ENCODE measurements at regions of chr7 and their contacts with region 1.

Region 1: GRCh38 chr7:117435475-117436043 is 8.3 kb upstream of the ASZ1 start:
- DNase-seq: no peak
- H3K4me3 Mint-ChIP-seq: no peak overlapping the region
- H3K27ac Mint-ChIP-seq: no peak overlapping the region
- H3K4me1 Mint-ChIP-seq: peaks cover 9% of the 10 kb centered on the region
- H3K27me3 Mint-ChIP-seq: peaks cover 5% of the 10 kb centered on the region

Region 2: GRCh38 chr7:117424090-117424829 is 11.3 kb before region 1 on chr7:
- CTCF ChIA-PET with region 1: no interaction called
- POLR2A ChIA-PET with region 1: no interaction called
- intact Hi-C with region 1: loop called (anchors 1 kb)
- DNase-seq: no peak
- H3K4me3 Mint-ChIP-seq: no peak overlapping the region
- H3K27ac Mint-ChIP-seq: no peak overlapping the region
- H3K4me1 Mint-ChIP-seq: no peaks in the 10 kb centered on the region
- H3K27me3 Mint-ChIP-seq: no peaks in the 10 kb centered on the region

Region 3: DNA sequence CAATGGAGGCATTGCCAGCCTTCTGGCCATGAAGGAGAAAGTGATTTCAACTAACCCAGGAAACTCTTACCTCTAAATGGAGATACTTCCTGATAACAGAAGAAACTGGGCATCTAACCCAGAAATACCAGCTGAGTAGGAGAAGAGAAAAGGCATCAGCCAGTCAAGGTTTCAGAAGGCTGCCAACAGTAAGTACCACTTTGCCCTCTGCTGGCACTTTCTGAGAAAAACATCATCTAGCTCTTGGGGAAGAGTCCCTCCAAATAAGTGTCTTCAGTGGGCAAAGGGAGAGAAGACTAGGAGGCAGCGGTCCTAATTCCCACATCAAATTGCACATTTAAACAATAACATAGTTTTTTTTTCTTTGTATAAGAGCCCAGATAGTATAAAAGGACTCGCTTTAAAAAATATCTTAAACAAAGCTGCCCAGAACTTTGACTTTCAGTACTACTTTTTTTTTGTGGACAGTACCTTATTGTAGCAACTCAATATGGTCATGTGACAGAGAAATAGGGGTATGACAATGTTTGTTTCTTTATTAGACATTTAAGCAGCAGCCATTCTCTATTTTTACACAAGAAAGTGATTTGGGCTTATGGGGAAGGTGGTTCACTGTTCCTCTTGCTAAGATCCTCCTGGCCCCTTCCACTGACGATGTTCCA is 280.4 kb after region 1 on chr7:
- CTCF ChIA-PET with region 1: no interaction called
- POLR2A ChIA-PET with region 1: no interaction called
- intact Hi-C with region 1: no loop called
- DNase-seq: no peak
- H3K4me3 Mint-ChIP-seq: no peak overlapping the region
- H3K27ac Mint-ChIP-seq: no peak overlapping the region
- H3K4me1 Mint-ChIP-seq: no peaks in the 10 kb centered on the region
- H3K27me3 Mint-ChIP-seq: no peaks in the 10 kb centered on the region